Activated T-helper 1 cell treated with anti-CD3 and anti-CD28 coated beads, Interleukin-12 subunit alpha, Interleukin-12 subunit beta, Interleukin-2, Interleukin-4 antibody, amounts not matched to agents 30 ng/mL and 10 ng/mL and 1 ng/mL, durations not matched to agents 14 hours and 24 hours and 36 hours (primary cell): ENCODE measurements at regions of chr19 and their contacts with region 1.

Region 1: DNA sequence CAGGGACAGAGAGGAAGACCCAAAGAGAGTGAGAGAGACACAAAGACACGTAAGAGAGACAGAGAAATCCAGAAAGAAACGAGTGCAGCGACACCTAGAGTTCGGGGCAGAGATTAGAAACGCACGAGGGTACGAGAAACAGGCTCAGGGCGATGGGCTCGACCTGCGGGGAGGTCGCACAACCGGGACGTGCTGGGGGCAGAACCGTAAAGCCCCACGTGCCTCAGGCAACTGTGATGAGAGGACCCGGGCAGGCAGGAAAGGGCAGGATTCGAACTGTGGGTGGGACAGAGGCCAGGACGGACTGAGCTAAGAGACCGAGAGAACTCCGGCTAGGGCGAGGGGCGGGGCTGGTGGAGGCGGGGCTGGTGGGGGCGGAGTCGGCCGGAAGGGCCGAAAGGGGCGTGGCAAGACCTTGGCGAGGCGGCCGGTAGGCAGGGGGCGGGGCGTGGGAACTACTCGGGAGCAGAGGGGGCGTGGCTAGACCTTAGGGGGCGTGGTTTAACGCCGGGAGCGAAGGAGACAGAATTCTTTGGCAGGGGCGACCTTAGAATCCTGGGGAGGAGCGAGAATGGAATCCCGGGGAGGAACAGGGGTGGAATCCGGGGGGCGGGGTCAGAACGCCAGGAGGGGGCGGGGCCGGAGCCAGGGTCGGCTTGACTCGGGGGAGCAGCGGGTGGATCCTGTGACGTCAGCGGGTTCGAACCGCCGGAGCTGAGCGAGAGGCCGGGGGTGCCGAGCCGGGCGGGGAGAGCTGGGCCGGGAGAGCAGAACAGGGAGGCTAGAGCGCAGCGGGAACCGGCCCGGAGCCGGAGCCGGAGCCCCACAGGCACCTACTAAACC is at the start of gene NECTIN2:
- DNase-seq: peak; percentile 73
- H3K4me3 Mint-ChIP-seq: peak within 1 kb of the TSS; percentile 83
- H3K27ac Mint-ChIP-seq: peak within 1 kb of the TSS; percentile 55
- H3K4me1 Mint-ChIP-seq: peaks cover 21% of the 10 kb centered on the region
- H3K27me3 Mint-ChIP-seq: peaks cover 34% of the 10 kb centered on the region
- total RNA-seq, gene NECTIN2: 0.08 and 0.39 TPM in 2 replicates

Region 2: DNA sequence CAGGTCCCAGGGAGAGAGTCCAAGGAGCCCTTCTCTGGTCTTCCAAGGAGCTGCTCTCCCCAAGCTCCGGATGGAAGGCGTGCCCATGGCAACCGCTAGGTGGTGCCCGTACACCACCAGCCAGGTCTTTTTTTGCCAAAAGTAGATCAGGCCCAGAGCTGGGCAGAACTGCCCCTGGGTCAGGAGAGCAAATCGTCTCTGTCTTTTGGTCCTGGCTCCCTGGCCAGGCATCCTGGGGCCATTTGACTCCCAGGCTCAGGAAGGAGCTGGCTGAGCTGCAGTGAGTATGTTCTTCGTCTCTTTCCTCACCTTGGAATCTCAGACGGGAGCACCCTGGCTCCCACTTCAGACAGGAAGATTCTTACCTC is 121.9 kb before region 1 on chr19:
- intact Hi-C with region 1: loop called (anchors 1 kb)
- DNase-seq: peak; percentile 77
- H3K4me3 Mint-ChIP-seq: peak overlapping the region; percentile 67
- H3K27ac Mint-ChIP-seq: peak overlapping the region; percentile 25
- H3K4me1 Mint-ChIP-seq: peaks cover 58% of the 10 kb centered on the region
- H3K27me3 Mint-ChIP-seq: no peaks in the 10 kb centered on the region

Region 3: GRCh38 chr19:44737238-44738071 is 108.4 kb before region 1 on chr19:
- intact Hi-C with region 1: no loop called
- DNase-seq: no peak
- H3K4me3 Mint-ChIP-seq: no peak overlapping the region
- H3K27ac Mint-ChIP-seq: no peak overlapping the region
- H3K4me1 Mint-ChIP-seq: peaks cover 10% of the 10 kb centered on the region
- H3K27me3 Mint-ChIP-seq: peaks cover 11% of the 10 kb centered on the region

Region 4: GRCh38 chr19:44770550-44771257 is 75.1 kb before region 1 on chr19:
- intact Hi-C with region 1: loop called (anchors 1 kb)
- DNase-seq: peak; percentile 94
- H3K4me3 Mint-ChIP-seq: peak overlapping the region; percentile 27
- H3K27ac Mint-ChIP-seq: peak overlapping the region; percentile 64
- H3K4me1 Mint-ChIP-seq: peaks cover 30% of the 10 kb centered on the region
- H3K27me3 Mint-ChIP-seq: peaks cover 2% of the 10 kb centered on the region

Region 5: GRCh38 chr19:44800461-44800860 is 45.4 kb before region 1 on chr19:
- intact Hi-C with region 1: loop called (anchors 1 kb)
- DNase-seq: peak; percentile 78
- H3K4me3 Mint-ChIP-seq: no peak overlapping the region
- H3K27ac Mint-ChIP-seq: no peak overlapping the region
- H3K4me1 Mint-ChIP-seq: peaks cover 9% of the 10 kb centered on the region
- H3K27me3 Mint-ChIP-seq: peaks cover 13% of the 10 kb centered on the region

Region 6: DNA sequence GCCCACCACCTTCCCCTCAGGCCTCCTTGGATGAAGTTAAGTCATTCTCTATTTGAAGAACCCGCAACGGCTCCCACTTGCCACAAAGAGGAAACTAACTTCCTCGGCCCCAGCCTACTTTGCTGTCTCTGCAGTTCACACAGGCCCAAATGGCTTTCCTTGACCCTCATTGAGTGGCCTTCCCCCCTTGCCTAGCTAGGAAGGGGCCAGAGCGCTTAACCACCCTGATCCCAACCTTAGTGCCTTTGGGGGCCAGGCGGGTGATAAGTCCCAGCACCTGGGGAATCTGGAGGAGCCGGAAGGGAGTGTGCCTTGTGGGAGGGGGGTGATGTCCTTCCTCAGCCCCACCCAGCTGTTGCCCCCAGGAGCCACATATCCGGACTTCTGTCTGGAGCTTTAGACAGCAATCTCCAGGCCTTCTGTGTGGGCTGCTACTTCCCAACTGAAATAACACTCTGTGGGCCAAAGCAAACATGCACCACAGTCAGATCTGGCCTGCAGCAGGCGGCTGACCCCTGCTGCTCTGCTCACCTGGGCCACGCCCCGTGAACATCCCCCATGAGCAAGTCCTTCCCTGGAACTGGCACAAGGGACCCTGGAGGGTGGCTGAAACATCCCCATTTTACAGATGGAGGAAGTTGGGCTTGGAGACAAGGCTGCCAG is 10.7 kb after region 1 on chr19:
- intact Hi-C with region 1: no loop called
- DNase-seq: no peak
- H3K4me3 Mint-ChIP-seq: no peak overlapping the region
- H3K27ac Mint-ChIP-seq: no peak overlapping the region
- H3K4me1 Mint-ChIP-seq: no peaks in the 10 kb centered on the region
- H3K27me3 Mint-ChIP-seq: peaks cover 11% of the 10 kb centered on the region

Region 7: DNA sequence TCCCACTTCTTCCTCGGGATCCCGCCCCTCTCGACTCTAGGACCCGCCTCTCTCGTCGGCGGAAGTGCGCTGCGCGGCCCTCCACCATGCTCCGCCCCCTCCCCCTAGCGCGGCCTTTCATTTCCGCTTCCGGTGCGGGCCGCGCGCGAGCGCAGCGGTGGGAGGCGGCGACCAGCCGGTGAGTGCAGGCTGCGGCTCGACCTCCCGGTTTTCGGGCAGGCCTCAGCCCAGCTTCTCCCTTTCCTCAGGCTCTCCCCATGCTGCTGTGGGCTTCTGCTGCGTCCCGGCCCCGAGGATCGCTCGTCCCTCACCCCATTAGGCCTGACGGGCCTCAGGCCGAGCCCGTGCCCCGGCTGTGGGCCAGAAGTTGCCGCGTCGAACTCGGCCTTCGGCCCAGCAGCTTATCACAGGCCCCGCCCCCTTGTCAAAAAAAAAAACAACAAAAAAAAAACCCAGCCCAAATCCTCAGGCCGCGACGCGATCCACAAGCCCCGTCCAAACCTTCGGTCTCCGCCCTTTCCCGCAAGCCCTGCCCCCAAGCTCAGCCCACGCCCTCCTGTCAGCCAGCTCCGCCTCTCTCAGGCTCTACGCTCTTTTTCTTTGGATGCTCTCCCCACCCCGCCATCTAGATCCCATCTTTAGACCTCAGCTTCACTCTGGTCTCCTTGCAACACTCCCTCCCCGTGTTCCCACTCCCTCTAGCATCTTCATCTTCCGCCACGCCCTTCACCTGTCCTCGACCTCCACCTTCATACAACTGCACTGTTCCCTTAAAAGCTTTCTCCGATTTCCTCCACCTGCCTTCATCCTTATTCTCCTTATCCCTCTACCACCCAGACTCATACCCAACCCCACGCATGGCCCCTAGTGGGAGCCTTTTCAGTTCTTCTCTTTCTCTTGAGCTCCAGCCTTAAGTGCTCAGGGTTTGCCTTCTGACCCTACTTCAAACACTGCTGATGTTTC is 193.4 kb after region 1 on chr19 and contains the start of gene CLASRP:
- intact Hi-C with region 1: loop called (anchors 2 kb)
- DNase-seq: peak; percentile 87
- H3K4me3 Mint-ChIP-seq: peak within 1 kb of the TSS; percentile 93
- H3K27ac Mint-ChIP-seq: peak within 1 kb of the TSS; percentile 95
- H3K4me1 Mint-ChIP-seq: peaks cover 23% of the 10 kb centered on the region
- H3K27me3 Mint-ChIP-seq: no peaks in the 10 kb centered on the region
- total RNA-seq, gene CLASRP: 106 and 116 TPM in 2 replicates